PC-3 (cell line): ENCODE measurements at regions of chr10 and their contacts with region 1.

Region 1: GRCh38 chr10:60434418-60435046 is 44.9 kb upstream of the ANK3 start:
- DNase-seq: peak; percentile 92
- ATAC-seq: peak; percentile 53
- H3K4me3 ChIP-seq: no peak overlapping the region
- H3K27ac ChIP-seq: no peak overlapping the region
- H3K4me1 ChIP-seq: peaks cover 33% of the 10 kb centered on the region
- H3K27me3 ChIP-seq: no peaks in the 10 kb centered on the region
- CTCF ChIP-seq: peak; percentile 99

Region 2: GRCh38 chr10:60114765-60115586 is 319.6 kb before region 1 on chr10:
- CTCF ChIA-PET with region 1: no interaction called
- POLR2A ChIA-PET with region 1: no interaction called
- intact Hi-C with region 1: loop called (anchors 1 kb)
- DNase-seq: peak; percentile 96
- ATAC-seq: peak; percentile 92
- H3K4me3 ChIP-seq: no peak overlapping the region
- H3K27ac ChIP-seq: no peak overlapping the region
- H3K4me1 ChIP-seq: peaks cover 7% of the 10 kb centered on the region
- H3K27me3 ChIP-seq: no peaks in the 10 kb centered on the region
- CTCF ChIP-seq: peak; percentile 99

Region 3: GRCh38 chr10:60237977-60238758 is 196.4 kb before region 1 on chr10:
- CTCF ChIA-PET with region 1: interaction called, 16 read pairs
- POLR2A ChIA-PET with region 1: interaction called, 3 read pairs
- intact Hi-C with region 1: loop called (anchors 1 kb)
- DNase-seq: peak; percentile 89
- ATAC-seq: peak; percentile 99
- H3K4me3 ChIP-seq: peak overlapping the region; percentile 66
- H3K27ac ChIP-seq: 0 out of 2 replicates have a peak overlapping the region, but pooled peaks have one; percentile 3
- H3K4me1 ChIP-seq: peaks cover 25% of the 10 kb centered on the region
- H3K27me3 ChIP-seq: no peaks in the 10 kb centered on the region
- CTCF ChIP-seq: peak; percentile 96

Region 4: GRCh38 chr10:60335708-60336107 is 98.8 kb before region 1 on chr10:
- CTCF ChIA-PET with region 1: no interaction called
- POLR2A ChIA-PET with region 1: interaction called, 3 read pairs
- intact Hi-C with region 1: loop called (anchors 1 kb)
- DNase-seq: peak; percentile 72
- ATAC-seq: peak; percentile 85
- H3K4me3 ChIP-seq: no peak overlapping the region
- H3K27ac ChIP-seq: no peak overlapping the region
- H3K4me1 ChIP-seq: peaks cover 9% of the 10 kb centered on the region; the same call in 1 of the 2 replicates
- H3K27me3 ChIP-seq: no peaks in the 10 kb centered on the region
- CTCF ChIP-seq: peak; percentile 95

Region 5: DNA sequence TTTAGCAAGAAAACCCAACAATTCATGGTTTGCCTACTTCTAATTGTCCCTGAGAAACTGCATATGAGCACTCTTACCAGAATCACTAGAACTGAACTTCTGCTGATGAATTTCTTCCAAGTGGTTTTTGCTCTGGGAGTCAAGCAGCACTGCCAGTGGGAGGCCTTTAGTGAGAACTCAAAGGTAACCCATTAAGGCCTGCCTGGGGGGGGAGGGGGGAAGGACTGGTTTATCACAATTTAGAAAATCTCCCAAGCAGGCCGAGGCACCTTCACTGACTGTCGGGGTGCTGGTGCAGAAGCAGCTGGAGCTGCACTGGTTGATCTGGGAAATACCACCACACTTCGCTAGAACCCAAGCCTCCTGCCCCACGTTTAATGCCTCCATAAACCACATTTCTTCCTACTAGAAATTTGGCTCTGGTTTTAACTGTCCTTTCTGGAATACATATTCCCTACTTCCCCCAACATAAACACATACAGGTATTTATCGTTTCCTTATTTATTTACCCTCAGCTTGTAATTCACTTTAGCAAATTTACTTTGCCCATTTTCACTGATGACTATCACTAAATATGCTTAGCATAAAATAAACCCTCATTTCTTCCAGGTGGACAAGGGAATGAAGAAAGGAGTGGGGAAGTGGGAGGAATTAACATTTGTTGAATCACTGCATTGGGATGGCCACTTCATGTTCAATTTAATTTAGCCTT is 59.1 kb before region 1 on chr10:
- CTCF ChIA-PET with region 1: no interaction called
- POLR2A ChIA-PET with region 1: no interaction called
- intact Hi-C with region 1: loop called (anchors 2 kb)
- DNase-seq: peak; percentile 64
- ATAC-seq: peak; percentile 90
- H3K4me3 ChIP-seq: no peak overlapping the region
- H3K27ac ChIP-seq: no peak overlapping the region
- H3K4me1 ChIP-seq: peaks cover 26% of the 10 kb centered on the region
- H3K27me3 ChIP-seq: no peaks in the 10 kb centered on the region
- CTCF ChIP-seq: no peak